ENCODE measurements at regions of chr4 and their contacts with region 1.

Region 1: DNA sequence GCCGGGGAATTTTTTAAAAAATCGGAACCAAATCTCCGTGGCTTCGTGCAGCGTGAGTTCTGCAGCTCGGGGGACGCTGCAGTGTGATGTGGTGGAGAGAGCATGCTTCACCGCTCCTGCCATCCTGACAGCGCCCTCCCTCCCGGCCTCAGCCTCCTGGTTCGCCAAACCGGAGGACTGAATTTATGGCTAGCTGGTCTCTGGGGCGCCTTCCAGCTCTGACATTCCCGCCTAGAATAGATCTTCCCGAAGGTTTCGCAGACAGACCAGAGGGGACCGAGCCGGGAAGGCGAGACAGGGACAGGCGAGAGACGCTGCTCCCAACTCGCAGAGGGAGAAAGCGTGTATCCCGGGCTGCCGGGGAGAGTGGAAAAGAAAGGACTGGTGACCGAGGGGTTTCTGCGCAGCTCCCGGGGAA is 25.9 kb downstream of the HOPX start:
- DNase-seq: peak; percentile 21
- H3K4me3 Mint-ChIP-seq: peak overlapping the region; percentile 81
- H3K27ac Mint-ChIP-seq: peak overlapping the region; percentile 62
- H3K4me1 Mint-ChIP-seq: peaks cover 51% of the 10 kb centered on the region
- H3K27me3 Mint-ChIP-seq: peaks cover 42% of the 10 kb centered on the region

Region 2: GRCh38 chr4:56467284-56468096 is 187.7 kb before region 1 on chr4 and contains the start of gene SRP72:
- CTCF ChIA-PET with region 1: no interaction called
- intact Hi-C with region 1: loop called (anchors 10 kb)
- DNase-seq: peak; percentile 91
- H3K4me3 Mint-ChIP-seq: peak within 1 kb of the TSS; percentile 100
- H3K27ac Mint-ChIP-seq: peak within 1 kb of the TSS; percentile 97
- H3K4me1 Mint-ChIP-seq: peaks cover 33% of the 10 kb centered on the region
- H3K27me3 Mint-ChIP-seq: no peaks in the 10 kb centered on the region
- total RNA-seq, gene SRP72: 200 to 212 TPM

Region 3: GRCh38 chr4:56575820-56576429 is 79.3 kb before region 1 on chr4:
- CTCF ChIA-PET with region 1: interaction called, 3 read pairs
- intact Hi-C with region 1: loop called (anchors 2 kb)
- DNase-seq: no peak
- H3K4me3 Mint-ChIP-seq: no peak overlapping the region
- H3K27ac Mint-ChIP-seq: no peak overlapping the region
- H3K4me1 Mint-ChIP-seq: no peaks in the 10 kb centered on the region
- H3K27me3 Mint-ChIP-seq: no peaks in the 10 kb centered on the region

Region 4: GRCh38 chr4:56681158-56681852 is 26.1 kb after region 1 on chr4 and contains the start of gene HOPX:
- CTCF ChIA-PET with region 1: interaction called, 4 read pairs
- intact Hi-C with region 1: loop called (anchors 1 kb)
- DNase-seq: peak; percentile 82
- H3K4me3 Mint-ChIP-seq: peak within 1 kb of the TSS; percentile 16
- H3K27ac Mint-ChIP-seq: no peak within 1 kb of the TSS
- H3K4me1 Mint-ChIP-seq: peaks cover 23% of the 10 kb centered on the region
- H3K27me3 Mint-ChIP-seq: peaks cover 34% of the 10 kb centered on the region
- total RNA-seq, gene HOPX: 14.0 to 14.7 TPM

Region 5: GRCh38 chr4:56907489-56908205 is 252.4 kb after region 1 on chr4 and contains the start of gene REST:
- CTCF ChIA-PET with region 1: no interaction called
- intact Hi-C with region 1: loop called (anchors 5 kb)
- DNase-seq: peak; percentile 64
- H3K4me3 Mint-ChIP-seq: peak within 1 kb of the TSS; percentile 81
- H3K27ac Mint-ChIP-seq: peak within 1 kb of the TSS; percentile 65
- H3K4me1 Mint-ChIP-seq: peaks cover 43% of the 10 kb centered on the region
- H3K27me3 Mint-ChIP-seq: no peaks in the 10 kb centered on the region
- total RNA-seq, gene REST: 35.6 to 36.8 TPM